Mammary epithelial cell (primary cell): ENCODE measurements at regions of chr3 and their contacts with region 1.

Region 1: DNA sequence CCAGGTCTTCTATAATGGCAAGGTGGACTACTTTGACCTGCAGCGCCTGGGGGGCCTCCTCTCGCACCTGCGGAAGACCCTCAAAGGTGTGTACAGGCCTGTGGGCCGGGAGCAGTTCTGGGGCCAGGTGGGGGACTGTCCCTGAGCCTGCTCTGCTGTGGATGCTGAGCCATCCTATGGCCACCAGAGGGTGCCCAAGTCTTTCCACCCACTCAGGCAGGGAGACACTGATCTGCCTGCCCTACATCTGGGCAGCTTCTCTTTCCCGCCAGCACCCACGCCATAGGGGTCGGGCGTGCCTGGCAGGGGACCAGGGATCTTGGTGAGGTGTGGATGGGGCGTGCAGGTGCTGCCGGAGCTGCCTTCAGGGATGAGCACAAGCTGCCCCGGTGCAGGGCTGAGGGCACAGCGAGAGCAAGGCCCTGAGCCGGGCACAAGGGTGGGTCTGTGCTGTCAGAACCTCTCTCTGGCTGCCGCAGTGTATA is 14.1 kb downstream of the RNF123 start:
- DNase-seq: peak; percentile 49
- H3K4me3 ChIP-seq: no peak overlapping the region
- H3K27ac ChIP-seq: no peak overlapping the region
- H3K4me1 ChIP-seq: peaks cover 3% of the 10 kb centered on the region
- H3K27me3 ChIP-seq: no peaks in the 10 kb centered on the region
- CTCF ChIP-seq: peak; percentile 93 to 94

Region 2: DNA sequence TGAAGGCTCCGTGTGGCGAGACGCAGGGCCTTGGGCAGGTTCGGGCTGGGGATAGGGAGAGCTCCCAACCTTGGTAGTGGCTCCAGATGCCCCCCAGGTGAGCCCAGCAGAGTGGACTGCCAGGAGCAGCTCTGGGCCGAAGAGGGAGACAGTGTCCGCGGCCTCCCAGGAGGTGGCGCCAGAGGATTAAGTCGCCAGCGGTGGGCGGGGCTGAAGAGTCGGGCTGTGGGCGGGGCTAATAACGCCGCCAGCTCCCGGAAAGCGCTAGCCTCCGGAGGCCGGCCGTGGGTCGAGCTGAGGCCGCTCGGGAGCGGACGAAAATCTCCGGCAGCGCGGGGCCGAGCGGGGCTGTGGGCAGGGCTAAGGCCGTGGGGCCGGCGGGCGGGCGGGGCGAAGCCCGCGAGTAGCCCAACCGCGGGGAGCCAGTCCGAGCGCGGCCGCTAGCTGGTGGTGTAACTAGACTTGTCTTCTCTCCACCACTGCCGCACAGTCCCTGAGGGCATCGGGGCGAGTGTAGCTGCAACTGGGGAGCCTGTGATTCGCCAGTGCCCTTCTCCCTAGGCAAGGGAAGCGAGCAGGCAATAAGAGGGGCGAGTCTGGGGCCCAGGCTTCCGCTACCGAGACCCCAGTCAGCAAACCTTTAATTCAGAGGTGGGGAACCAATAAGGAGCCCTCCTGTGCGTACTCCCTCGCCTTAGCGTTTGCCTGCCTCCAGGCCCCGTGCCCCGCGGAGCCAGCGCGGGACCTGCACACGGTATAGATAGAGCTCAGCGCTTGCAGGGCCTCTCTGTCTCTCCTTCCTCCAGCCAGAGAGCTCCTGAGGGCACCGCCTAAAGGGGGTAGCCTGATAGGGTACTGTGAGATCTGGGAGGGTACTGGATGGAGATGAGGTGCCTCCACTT is 163.6 kb before region 1 on chr3:
- CTCF ChIA-PET with region 1: interaction called, 3 read pairs
- dilution Hi-C with region 1: no loop called
- in situ Hi-C with region 1: no loop called
- intact Hi-C with region 1: loop called (anchors 1 kb)
- DNase-seq: peak; percentile 93
- H3K4me3 ChIP-seq: peak overlapping the region; percentile 30 to 47 (median 42)
- H3K27ac ChIP-seq: no peak overlapping the region
- H3K4me1 ChIP-seq: peaks cover 5% of the 10 kb centered on the region
- H3K27me3 ChIP-seq: no peaks in the 10 kb centered on the region
- CTCF ChIP-seq: peak; percentile 55 to 89

Region 3: DNA sequence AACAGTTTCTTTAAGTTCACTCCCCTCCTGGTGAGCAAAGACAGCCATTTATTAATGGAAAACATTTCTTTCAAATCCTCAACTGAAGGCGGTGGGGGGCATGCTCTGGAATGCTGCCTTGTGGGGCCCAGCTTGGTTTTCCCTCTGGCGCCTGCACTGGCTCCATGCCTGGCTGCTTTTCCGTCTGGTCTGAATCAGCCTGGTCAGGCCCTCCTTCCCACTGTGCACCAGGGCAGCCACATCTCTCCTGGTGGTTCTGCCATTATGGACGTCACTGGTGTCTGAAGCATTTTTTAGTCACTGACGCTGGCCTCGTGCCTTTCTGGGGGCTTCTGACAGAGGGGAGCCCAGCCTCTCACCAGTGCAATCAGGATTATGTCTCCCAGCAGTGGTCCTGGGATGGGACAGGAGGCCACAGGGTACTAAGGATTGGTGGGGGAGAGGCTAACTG is 87.0 kb before region 1 on chr3:
- CTCF ChIA-PET with region 1: no interaction called
- dilution Hi-C with region 1: no loop called
- in situ Hi-C with region 1: no loop called
- intact Hi-C with region 1: no loop called
- DNase-seq: no peak
- H3K4me3 ChIP-seq: no peak overlapping the region
- H3K27ac ChIP-seq: no peak overlapping the region
- H3K4me1 ChIP-seq: no peaks in the 10 kb centered on the region
- H3K27me3 ChIP-seq: no peaks in the 10 kb centered on the region
- CTCF ChIP-seq: no peak

Region 4: DNA sequence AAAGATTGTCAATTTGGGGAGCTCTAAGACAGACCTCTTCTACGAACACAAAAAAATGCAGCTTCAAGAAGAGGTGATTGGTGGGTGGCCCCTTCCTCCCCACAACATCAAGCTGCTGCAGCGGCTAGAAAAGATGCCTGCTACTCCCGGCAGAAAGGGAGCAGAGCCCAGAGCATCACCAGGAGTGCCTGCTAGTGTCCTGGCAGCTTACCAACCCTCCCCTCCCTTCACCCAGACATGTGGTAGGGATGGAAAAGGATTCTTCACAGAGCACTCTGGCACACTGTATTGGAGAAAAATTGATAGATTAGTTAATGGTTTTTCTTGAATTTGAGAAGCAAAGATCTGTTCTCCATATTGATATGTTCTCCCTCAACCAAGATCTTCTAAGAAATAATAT is 72.1 kb after region 1 on chr3:
- CTCF ChIA-PET with region 1: no interaction called
- dilution Hi-C with region 1: loop called (anchors 5 kb)
- in situ Hi-C with region 1: no loop called
- intact Hi-C with region 1: no loop called
- DNase-seq: no peak
- H3K4me3 ChIP-seq: no peak overlapping the region
- H3K27ac ChIP-seq: no peak overlapping the region
- H3K4me1 ChIP-seq: no peaks in the 10 kb centered on the region
- H3K27me3 ChIP-seq: no peaks in the 10 kb centered on the region
- CTCF ChIP-seq: no peak

Region 5: DNA sequence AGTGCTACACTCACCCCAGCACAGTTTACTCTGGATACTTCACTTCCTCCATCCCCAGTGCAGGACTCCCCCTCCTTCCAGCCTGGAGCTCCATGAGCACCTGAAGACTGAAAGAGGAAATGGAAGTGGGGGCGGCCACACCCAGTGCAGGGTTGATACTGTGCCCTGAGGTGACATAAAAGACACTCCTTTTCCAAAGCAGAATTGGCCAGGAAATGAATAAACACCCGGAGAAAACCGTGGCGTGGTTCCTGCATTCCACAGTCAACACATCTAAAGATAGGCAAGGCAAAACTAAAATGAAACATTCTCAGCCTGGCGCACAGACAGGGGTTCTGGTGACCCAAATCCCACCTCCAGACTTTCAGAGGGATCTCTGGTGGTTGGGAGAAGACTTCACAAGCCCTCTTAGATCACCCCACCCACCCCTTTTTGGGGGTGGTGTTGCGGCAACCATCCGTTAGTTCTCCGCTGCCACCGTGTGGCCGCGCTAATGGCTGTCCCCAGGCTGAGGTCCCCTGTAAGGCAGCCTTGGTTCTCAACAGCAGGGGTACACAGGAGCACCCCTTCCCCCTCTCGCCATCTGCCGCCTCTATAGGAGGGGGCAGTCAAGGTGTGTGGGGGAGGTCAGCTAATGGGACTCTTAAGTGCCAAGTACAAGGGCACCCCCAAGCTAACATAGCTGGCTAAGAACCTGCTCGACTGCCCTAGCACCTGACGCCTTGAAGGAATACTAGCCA is 202.7 kb after region 1 on chr3:
- CTCF ChIA-PET with region 1: interaction called, 3 read pairs
- dilution Hi-C with region 1: no loop called
- in situ Hi-C with region 1: loop called in 1 of 2 experiments (anchors 10 kb)
- intact Hi-C with region 1: loop called (anchors 1 kb)
- DNase-seq: peak; percentile 60
- H3K4me3 ChIP-seq: peak overlapping the region; percentile 17 to 34 (median 25)
- H3K27ac ChIP-seq: peak overlapping the region; percentile 31
- H3K4me1 ChIP-seq: peaks cover 48% of the 10 kb centered on the region
- H3K27me3 ChIP-seq: no peaks in the 10 kb centered on the region
- CTCF ChIP-seq: peak; percentile 59 to 83